ENCODE measurements at regions of chr17 and their contacts with region 1.

Region 1: GRCh38 chr17:7239091-7240027 is at the start of gene PHF23:
- DNase-seq: peak; percentile 96 to 99
- H3K4me3 ChIP-seq: peak within 1 kb of the TSS; percentile 93
- H3K27ac ChIP-seq: peak within 1 kb of the TSS; percentile 80
- H3K4me1 ChIP-seq: peaks cover 38% of the 10 kb centered on the region
- H3K27me3 ChIP-seq: no peaks in the 10 kb centered on the region
- CTCF ChIP-seq: no peak
- total RNA-seq, gene PHF23: 64.5 and 65.8 TPM in 2 replicates

Region 2: GRCh38 chr17:6981426-6981825 is 257.9 kb before region 1 on chr17:
- CTCF ChIA-PET with region 1: no interaction called
- POLR2A ChIA-PET with region 1: no interaction called
- intact Hi-C with region 1: no loop called
- DNase-seq: no peak
- H3K4me3 ChIP-seq: no peak overlapping the region
- H3K27ac ChIP-seq: no peak overlapping the region
- H3K4me1 ChIP-seq: peaks cover 26% of the 10 kb centered on the region
- H3K27me3 ChIP-seq: no peaks in the 10 kb centered on the region
- CTCF ChIP-seq: no peak

Region 3: GRCh38 chr17:7214300-7215135 is 24.8 kb before region 1 on chr17:
- CTCF ChIA-PET with region 1: interaction called, 30 read pairs
- POLR2A ChIA-PET with region 1: interaction called, 4 read pairs
- intact Hi-C with region 1: loop called (anchors 1 kb)
- DNase-seq: peak; percentile 90 to 100
- H3K4me3 ChIP-seq: peak overlapping the region; percentile 52
- H3K27ac ChIP-seq: no peak overlapping the region
- H3K4me1 ChIP-seq: peaks cover 20% of the 10 kb centered on the region
- H3K27me3 ChIP-seq: no peaks in the 10 kb centered on the region
- CTCF ChIP-seq: peak; percentile 68

Region 4: DNA sequence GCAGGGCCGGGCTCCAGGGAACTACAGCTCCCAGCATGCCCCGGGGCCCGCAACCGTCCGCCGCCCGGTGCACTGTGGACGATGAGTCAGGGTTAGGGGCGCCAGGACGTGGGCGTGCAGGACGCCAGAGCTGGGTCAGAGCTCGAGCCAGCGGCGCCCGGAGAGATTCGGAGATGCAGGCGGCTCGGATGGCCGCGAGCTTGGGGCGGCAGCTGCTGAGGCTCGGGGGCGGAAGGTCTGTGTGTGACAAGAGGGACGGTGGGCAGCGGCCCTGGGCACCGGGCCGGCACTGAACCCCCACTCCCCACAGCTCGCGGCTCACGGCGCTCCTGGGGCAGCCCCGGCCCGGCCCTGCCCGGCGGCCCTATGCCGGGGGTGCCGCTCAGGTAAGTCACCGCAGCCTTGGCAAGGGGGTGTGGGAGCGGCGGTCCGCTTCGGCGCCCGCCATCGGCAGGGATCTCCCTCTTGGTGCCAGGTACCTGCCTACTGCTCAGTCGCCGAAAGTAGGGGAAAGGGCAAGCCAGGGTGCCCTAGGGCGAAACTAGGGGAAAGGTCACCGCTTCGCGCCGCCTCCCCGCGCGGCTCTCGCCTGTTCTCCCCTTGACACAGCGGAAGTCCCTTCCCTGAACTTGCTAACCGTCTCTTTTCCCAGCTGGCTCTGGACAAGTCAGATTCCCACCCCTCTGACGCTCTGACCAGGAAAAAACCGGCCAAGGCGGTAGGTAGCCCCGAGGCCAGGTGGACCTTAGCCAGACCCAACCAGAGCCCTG is 19.4 kb before region 1 on chr17 and contains the starts of genes ACADVL and DLG4:
- CTCF ChIA-PET with region 1: interaction called, 30 read pairs
- POLR2A ChIA-PET with region 1: interaction called, 10 read pairs
- intact Hi-C with region 1: no loop called
- DNase-seq: peak; percentile 95 to 98
- H3K4me3 ChIP-seq: peak within 1 kb of the TSS; percentile 77
- H3K27ac ChIP-seq: peak within 1 kb of the TSS; percentile 98
- H3K4me1 ChIP-seq: peaks cover 36% of the 10 kb centered on the region
- H3K27me3 ChIP-seq: no peaks in the 10 kb centered on the region
- CTCF ChIP-seq: no peak
- total RNA-seq, gene ACADVL: 531 and 604 TPM in 2 replicates
- total RNA-seq, gene DLG4: 27.1 and 32.8 TPM in 2 replicates

Region 5: DNA sequence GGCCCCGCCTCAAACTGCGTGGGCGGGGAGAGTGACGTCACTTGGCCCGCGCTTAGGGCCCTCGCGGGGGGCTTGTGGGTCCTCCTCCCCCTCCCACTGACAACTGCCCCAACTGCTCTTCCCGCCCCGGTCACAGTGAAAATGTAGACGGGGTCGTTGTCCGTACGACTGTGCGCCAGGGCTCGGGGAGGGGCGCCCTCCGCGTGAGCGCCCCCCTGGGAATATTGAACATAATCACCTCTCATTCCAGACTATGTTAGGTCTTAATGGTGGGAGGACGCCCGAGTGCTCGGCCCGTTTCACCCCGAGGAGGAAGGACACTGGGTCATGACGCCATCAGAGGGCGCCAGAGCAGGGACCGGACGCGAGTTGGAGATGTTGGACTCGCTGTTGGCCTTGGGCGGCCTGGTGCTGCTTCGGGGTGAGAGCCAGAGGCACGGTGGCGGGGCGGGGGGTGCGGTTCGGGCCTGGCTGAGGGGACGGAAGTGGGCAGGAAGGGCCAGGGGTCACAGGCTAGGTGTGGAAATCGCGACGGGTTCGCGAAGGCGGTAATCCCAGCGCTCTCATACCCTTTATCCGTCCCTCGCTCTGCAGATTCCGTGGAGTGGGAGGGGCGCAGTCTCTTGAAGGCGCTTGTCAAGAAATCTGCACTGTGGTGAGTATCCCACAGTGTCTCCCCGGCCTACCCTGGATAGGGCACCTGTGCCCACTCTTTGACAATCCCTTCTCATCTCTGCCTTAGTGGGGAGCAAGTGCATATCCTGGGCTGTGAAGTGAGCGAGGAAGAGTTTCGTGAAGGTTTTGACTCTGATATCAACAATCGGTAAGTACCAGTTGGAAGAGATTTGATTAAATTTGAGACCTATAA is 13.1 kb after region 1 on chr17 and contains the start of gene ELP5:
- CTCF ChIA-PET with region 1: interaction called, 3 read pairs
- POLR2A ChIA-PET with region 1: interaction called, 5 read pairs
- intact Hi-C with region 1: loop called (anchors 2 kb)
- DNase-seq: peak; percentile 89 to 95
- H3K4me3 ChIP-seq: peak within 1 kb of the TSS; percentile 72
- H3K27ac ChIP-seq: peak within 1 kb of the TSS; percentile 89
- H3K4me1 ChIP-seq: peaks cover 28% of the 10 kb centered on the region
- H3K27me3 ChIP-seq: no peaks in the 10 kb centered on the region
- CTCF ChIP-seq: peak; percentile 31; the same call in 1 of the 2 replicates
- total RNA-seq, gene ELP5: 31.8 and 45.1 TPM in 2 replicates

Region 6: GRCh38 chr17:7444682-7445618 is 205.6 kb after region 1 on chr17 and contains the start of gene CHRNB1:
- CTCF ChIA-PET with region 1: no interaction called
- POLR2A ChIA-PET with region 1: no interaction called
- intact Hi-C with region 1: no loop called
- DNase-seq: peak; percentile 70 to 94
- H3K4me3 ChIP-seq: peak within 1 kb of the TSS; percentile 71
- H3K27ac ChIP-seq: peak within 1 kb of the TSS; percentile 75
- H3K4me1 ChIP-seq: peaks cover 12% of the 10 kb centered on the region
- H3K27me3 ChIP-seq: no peaks in the 10 kb centered on the region
- CTCF ChIP-seq: no peak
- total RNA-seq, gene CHRNB1: 31.9 and 53.4 TPM in 2 replicates